Motor neuron (in vitro differentiated cells): ENCODE measurements at regions of chr17 and their contacts with region 1.

Region 1: DNA sequence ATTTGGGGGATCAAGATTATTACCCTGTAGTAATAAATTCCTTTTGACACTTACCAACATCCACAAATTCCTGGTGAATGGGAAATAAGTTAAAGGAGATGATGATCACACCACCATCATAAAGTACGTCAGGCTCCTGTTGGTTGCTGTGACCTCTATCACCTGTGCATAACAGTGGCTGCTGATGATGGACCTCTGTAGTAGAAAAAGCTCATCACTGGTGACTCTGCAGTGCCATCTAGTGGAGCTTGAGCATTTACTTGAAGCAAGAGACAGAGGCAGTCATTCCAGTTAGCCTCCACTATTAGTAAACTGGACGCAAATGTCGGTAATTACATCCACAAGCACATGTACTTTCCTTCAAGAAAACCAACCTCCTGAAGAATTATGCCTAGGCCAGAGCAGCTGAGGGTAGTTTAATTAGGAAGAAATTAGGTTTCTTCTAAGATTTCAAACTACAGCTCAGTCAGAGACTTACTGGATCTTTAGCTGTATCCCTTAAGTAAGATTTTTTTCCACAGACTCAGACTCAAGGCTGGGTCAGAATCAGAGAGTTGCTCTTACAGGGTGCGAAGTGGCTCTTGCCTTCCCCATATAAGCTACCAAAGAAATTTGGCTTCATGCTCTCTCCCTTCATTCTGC is 39.3 kb downstream of the CYB561 start:
- ATAC-seq: peak; percentile 64 to 93 (median 84)
- H3K4me3 ChIP-seq: no peak overlapping the region
- H3K27ac ChIP-seq: no peak overlapping the region
- H3K4me1 ChIP-seq: peaks cover 4 to 6% of the 10 kb centered on the region in 2 donors

Region 2: GRCh38 chr17:62692721-62693483 is 713.9 kb before region 1 on chr17:
- in situ Hi-C with region 1: loop called in 5 of 9 experiments (anchors 25 kb)
- ATAC-seq: peak; percentile 19 to 76 (median 33)
- H3K4me3 ChIP-seq: no peak overlapping the region
- H3K27ac ChIP-seq: no peak overlapping the region
- H3K4me1 ChIP-seq: peaks cover 18 to 20% of the 10 kb centered on the region in 2 donors

Region 3: DNA sequence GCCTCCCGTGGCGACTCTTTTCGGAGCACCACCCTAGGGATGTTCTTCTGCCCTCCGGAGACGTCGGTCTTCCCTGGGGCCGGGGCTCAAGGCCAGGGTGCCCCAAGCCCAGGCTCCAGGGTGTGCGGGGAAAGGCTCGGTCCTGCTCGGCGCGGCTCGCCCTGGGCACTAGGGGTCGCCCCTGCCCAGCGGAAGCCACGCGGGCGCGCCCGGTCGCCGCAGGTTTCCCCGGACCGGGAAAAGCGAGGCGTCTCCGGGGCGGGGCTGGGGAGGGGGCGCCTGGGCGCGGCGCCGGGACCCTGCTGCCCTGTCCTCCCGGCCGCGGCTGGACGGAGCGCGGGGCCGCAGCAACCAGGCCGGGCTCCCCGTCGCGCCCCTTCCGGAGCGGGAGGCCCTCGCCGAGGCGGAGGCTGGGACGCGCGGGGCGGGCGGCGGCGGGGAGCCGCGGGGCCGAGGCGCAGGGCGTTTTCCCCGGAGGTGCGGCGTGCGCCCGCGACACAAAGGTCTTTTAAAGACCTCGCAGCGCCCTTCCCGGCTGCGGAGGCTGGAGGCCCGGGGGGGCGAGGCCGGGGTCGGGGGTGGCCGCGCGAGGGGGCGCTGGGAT is 702.9 kb before region 1 on chr17:
- in situ Hi-C with region 1: loop called in 7 of 9 experiments (anchors 25 kb)
- ATAC-seq: peak; percentile 88 to 97 (median 91)
- H3K4me3 ChIP-seq: peak overlapping the region; percentile 51 to 97 (median 67)
- H3K27ac ChIP-seq: peak overlapping the region; percentile 53 to 79
- H3K4me1 ChIP-seq: peaks cover 21% of the 10 kb centered on the region in 2 donors

Region 4: DNA sequence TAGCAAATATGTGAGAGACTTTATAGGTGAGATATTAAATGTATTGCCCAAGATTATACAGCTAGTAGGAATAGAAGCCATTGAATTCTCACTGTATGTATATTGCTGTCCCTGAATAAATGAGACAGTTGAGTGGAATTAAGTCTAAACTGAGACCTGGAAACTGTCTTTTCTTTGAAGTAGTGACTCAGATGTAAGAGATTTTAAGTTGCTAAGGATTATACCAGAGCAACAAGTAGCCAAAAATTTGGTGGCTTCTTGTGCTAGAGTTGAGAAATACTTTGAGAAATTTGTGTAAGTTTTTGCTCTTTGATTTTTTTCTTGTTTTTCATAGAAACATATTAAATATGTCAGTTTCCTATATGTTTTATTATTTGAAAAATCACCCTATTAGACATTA is 382.1 kb before region 1 on chr17:
- in situ Hi-C with region 1: loop called in 1 of 9 experiments (anchors 25 kb)
- ATAC-seq: no peak
- H3K4me3 ChIP-seq: no peak overlapping the region
- H3K27ac ChIP-seq: no peak overlapping the region
- H3K4me1 ChIP-seq: no peaks in the 10 kb centered on the region

Region 5: GRCh38 chr17:63082273-63082993 is 324.4 kb before region 1 on chr17:
- in situ Hi-C with region 1: loop called in 1 of 9 experiments (anchors 25 kb)
- ATAC-seq: no peak
- H3K4me3 ChIP-seq: no peak overlapping the region
- H3K27ac ChIP-seq: no peak overlapping the region
- H3K4me1 ChIP-seq: peaks cover 2 to 3% of the 10 kb centered on the region in 2 donors

Region 6: DNA sequence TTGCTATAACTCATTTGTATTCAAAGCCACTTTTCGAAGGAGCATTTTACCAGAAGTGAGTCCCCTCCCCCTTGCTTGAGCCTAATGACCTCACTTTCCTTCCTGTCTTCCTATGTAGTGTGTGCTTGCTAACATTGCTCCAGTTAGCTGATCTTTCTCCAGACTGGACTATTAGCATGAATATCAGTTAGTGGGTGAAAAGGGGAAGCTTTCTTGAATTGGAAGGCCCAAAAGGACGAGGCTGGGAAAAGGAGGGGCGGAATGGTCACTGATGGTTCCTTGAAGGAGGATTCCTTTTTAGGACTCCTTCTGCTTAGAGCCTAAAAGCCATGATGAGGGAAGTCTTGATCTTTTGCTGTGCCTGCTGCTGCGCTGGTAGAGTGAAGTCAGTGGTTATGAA is 227.4 kb after region 1 on chr17:
- in situ Hi-C with region 1: no loop called
- ATAC-seq: peak in 5 of 8 experiments; percentile 29 to 91 (median 34)
- H3K4me3 ChIP-seq: no peak overlapping the region
- H3K27ac ChIP-seq: no peak overlapping the region
- H3K4me1 ChIP-seq: no peaks in the 10 kb centered on the region